ENCODE measurements at regions of chr17 and their contacts with region 1.

Region 1: DNA sequence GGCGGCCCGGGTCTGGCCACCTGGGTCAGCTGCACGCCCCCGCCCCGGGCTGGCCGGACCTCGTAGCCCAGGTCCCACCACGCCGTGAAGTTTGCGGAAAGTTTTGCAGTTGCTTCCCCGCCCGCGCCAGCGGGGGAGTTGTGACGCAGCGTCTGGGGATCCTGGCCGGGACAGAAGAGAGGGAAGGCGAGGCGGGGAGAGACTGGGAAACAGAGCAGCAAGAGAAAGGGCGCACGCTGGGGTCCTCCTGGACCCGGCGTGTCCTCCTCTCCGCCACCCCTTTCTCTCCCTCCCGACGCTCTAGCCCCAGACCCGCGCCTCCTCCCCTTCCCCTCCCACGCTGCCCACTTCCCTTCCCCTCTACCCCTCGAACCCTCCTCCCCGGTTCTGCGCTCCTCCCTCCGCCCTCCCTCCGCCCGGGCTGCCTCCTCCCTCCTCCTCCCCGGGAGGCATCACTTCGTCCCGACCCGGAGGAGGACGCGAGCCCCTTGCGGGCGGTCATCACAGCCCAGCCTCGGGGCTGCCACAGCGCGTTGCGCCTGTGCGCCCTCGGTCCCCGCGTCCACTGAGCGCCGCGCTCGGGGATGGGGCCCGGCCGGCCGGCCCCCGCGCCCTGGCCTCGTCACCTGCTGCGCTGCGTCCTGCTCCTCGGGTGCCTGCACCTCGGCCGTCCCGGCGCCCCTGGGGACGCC is at the start of gene MRC2:
- DNase-seq: peak in 4 of 9 donors; percentile 13 to 28 (median 20)
- ATAC-seq: peak; percentile 33
- H3K4me3 ChIP-seq: peak within 1 kb of the TSS; percentile 51
- H3K4me3 Mint-ChIP-seq: peak within 1 kb of the TSS; percentile 80 to 91 (median 88)
- H3K27ac ChIP-seq: no peak within 1 kb of the TSS
- H3K27ac Mint-ChIP-seq: peak within 1 kb of the TSS in 5 of 9 donors; percentile 29 to 85 (median 59)
- H3K4me1 ChIP-seq: peaks cover 0 to 6% of the 10 kb centered on the region in 2 donors
- H3K4me1 Mint-ChIP-seq: peaks cover 5 to 29% (median 11%) of the 10 kb centered on the region in 7 donors
- H3K27me3 ChIP-seq: no peaks in the 10 kb centered on the region
- H3K27me3 Mint-ChIP-seq: peaks cover 4 to 44% (median 11%) of the 10 kb centered on the region in 5 donors
- total RNA-seq, gene MRC2: 0.39 to 3.4 (median 2.7) TPM

Region 2: GRCh38 chr17:62653002-62653825 is 25.8 kb after region 1 on chr17:
- CTCF ChIA-PET with region 1: no interaction called
- POLR2A ChIA-PET with region 1: no interaction called
- intact Hi-C with region 1: loop called in 1 of 2 experiments (anchors 1 kb)
- DNase-seq: peak in 8 of 9 donors; percentile 14 to 94 (median 37)
- ATAC-seq: peak; percentile 83
- H3K4me3 ChIP-seq: peak overlapping the region; percentile 74
- H3K4me3 Mint-ChIP-seq: peak overlapping the region; percentile 71 to 95 (median 86)
- H3K27ac ChIP-seq: peak overlapping the region; percentile 32
- H3K27ac Mint-ChIP-seq: peak overlapping the region in 8 of 9 donors; percentile 2 to 86 (median 68)
- H3K4me1 ChIP-seq: peaks cover 8 to 12% of the 10 kb centered on the region in 2 donors
- H3K4me1 Mint-ChIP-seq: peaks cover 7 to 26% (median 21%) of the 10 kb centered on the region in 7 donors
- H3K27me3 ChIP-seq: no peaks in the 10 kb centered on the region
- H3K27me3 Mint-ChIP-seq: peaks cover 0 to 80% (median 0%) of the 10 kb centered on the region in 5 donors